ENCODE measurements at regions of chr14 and their contacts with region 1.

Region 1: DNA sequence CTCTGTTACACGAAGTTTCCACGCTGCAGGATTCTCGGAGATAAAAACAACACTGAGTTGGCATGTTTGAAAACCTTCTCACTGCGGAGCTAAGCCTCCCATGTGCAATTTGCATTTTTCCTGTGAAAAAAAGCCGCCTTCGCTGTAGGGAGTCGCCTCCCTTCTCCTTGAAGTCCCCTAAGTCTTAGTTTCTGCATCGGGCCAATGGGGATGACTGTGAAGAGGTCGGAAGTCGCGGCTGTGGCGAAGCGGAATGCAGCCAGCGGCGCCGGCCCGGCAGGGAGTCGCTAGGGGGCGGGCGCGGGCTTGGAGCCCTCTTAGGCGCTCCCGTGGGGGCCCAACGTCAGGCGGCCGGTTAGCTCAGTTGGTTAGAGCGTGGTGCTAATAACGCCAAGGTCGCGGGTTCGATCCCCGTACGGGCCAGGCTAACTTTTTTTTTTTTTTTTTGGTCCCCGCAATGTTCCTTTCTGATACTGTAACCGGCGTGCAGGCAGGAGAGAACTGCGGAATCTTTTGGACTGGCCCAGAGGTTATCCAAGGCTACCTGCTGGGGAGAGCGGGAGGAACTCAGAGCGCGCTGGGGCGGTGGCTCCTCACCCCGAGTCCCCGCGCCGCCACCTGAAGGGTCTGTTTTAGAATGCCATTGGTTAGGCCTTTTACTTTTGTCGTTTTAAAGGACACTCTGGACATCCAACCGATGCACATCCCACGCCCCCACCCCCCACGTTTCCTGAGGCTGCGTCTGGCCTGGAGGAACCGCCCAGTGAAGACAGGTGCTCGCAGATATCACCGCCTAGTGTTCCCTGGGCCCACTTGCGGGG is 2.6 kb upstream of the ZNF839 start:
- DNase-seq: peak; percentile 95
- H3K4me3 Mint-ChIP-seq: peak overlapping the region; percentile 95
- H3K27ac Mint-ChIP-seq: peak overlapping the region; percentile 98
- H3K4me1 Mint-ChIP-seq: peaks cover 56% of the 10 kb centered on the region
- H3K27me3 Mint-ChIP-seq: no peaks in the 10 kb centered on the region

Region 2: DNA sequence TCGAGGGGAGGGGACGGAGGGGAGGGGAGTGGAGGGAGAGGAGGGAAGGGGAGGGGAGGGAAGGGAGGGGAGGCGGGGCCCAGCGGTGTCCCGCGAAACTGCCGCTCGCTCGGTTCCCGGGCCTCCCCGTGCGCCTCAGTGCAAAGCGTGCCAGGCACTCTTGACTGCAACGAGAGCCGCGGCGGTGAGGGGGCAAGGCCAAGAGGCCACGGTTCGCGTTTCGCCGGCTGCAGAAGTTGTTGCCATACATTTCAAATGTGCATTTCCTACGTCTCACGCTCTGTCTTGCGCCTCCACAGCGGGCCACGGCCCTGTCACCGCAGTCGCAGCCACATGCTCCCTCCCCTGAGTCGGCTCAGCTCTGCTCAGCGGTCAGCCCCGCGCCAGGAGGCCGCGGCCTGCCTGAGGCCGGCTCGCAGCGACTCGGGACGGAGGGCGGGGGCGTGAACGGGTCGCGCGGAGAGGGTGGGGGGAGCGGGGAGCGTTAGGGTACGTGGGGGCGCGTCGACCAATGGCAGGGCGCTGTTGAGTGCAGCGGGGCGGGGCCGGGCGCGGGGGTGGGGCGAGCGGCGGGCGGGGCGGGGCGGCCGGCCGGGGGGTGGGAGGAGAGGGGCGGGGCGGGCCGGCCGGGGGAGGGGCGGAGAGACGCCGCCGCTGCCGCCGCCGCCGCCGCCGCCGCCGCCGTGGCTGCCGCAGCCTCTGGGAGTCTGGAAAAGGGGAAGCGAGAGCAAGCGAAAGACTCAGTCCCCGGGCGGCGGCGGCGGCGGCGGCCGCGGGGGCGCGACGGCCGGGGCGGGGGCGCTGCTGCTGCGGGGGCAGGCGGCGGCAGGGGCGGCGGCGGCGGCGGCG is 555.7 kb before region 1 on chr14 and contains the start of gene PPP2R5C:
- CTCF ChIA-PET with region 1: no interaction called
- intact Hi-C with region 1: loop called (anchors 5 kb)
- DNase-seq: peak; percentile 85
- H3K4me3 Mint-ChIP-seq: peak within 1 kb of the TSS; percentile 91
- H3K27ac Mint-ChIP-seq: peak within 1 kb of the TSS; percentile 79
- H3K4me1 Mint-ChIP-seq: peaks cover 42% of the 10 kb centered on the region
- H3K27me3 Mint-ChIP-seq: no peaks in the 10 kb centered on the region
- total RNA-seq, gene PPP2R5C: 280 to 294 TPM

Region 3: DNA sequence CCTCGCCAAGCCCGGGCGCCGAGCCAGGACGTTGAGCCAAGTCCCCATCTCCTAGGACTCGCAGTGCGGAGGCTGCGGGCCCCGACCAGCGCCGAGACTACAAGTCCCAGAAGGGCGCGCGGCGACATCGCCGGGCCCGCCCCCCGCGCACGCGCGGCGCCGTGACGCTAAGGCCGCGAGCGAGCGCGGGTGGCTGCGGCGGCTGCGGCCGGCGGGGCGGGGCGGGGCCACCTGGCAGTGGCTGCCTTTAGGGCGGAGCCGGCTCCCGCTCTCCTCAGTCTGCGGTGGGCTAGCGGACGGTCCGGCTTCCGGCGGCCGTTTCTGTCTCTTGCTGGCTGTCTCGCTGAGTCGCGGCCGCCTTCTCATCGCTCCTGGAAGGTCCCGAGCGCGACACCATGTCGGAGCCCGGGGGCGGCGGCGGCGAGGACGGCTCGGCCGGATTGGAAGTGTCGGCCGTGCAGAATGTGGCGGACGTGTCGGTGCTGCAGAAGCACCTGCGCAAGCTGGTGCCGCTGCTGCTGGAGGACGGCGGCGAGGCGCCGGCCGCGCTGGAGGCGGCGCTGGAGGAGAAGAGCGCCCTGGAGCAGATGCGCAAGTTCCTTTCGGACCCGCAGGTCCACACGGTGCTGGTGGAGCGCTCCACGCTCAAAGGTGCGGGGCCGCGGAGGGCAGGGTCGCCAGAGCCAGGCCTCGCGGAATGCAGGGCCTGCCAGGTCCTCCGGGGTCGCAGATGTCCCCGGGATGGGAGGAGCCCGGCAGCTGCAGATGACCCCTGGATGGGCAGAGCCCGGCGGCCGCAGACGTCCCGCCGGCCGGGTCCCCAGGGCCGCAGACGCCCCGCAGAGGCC is 352.4 kb before region 1 on chr14 and contains the start of gene DYNC1H1:
- CTCF ChIA-PET with region 1: interaction called, 3 read pairs
- intact Hi-C with region 1: loop called (anchors 1 kb)
- DNase-seq: peak; percentile 86
- H3K4me3 Mint-ChIP-seq: peak within 1 kb of the TSS; percentile 89
- H3K27ac Mint-ChIP-seq: peak within 1 kb of the TSS; percentile 71
- H3K4me1 Mint-ChIP-seq: peaks cover 39% of the 10 kb centered on the region
- H3K27me3 Mint-ChIP-seq: no peaks in the 10 kb centered on the region
- total RNA-seq, gene DYNC1H1: 207 to 208 TPM

Region 4: DNA sequence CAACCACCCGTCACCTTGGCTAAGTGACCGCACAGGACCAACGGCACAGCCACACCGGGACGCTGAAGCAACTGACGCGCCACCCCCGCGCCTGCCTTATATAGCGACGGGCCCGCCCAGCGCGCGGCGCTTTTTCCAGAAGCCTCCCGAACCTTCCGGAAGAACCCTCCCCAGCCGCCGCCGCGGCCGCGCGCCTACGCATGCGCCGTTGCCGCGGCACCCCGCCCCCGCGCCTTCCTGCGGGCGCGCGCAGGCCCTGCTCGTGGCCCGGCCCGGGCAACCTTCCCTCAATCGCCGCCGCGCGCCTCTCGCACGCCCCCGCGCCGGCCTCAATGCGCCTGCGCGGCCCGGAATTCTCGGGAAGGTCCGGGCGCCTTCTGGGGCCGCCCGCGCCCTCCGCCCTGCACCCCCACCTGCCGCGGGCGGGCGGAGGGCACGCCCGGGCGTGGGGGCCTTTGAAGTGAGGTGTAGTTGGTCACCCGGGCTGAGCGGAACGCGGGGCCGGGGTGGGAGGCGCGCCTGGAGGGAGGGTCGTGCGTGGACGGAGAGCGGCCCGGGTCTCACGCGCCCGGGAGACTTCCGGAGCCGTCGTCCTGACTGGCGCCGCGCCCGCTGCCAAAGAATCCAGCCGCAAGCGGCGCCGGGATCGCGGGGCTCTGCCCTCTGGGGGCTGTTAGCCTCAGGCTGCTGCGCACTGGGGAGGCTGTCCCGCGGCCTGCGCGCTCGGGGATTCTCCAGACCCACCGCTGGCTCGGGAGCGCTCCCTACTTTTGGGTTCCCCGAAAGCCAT is 229.8 kb before region 1 on chr14 and contains the start of gene HSP90AA1:
- CTCF ChIA-PET with region 1: interaction called, 5 read pairs
- intact Hi-C with region 1: loop called (anchors 1 kb)
- DNase-seq: peak; percentile 92
- H3K4me3 Mint-ChIP-seq: peak within 1 kb of the TSS; percentile 97
- H3K27ac Mint-ChIP-seq: peak within 1 kb of the TSS; percentile 95
- H3K4me1 Mint-ChIP-seq: peaks cover 49% of the 10 kb centered on the region
- H3K27me3 Mint-ChIP-seq: no peaks in the 10 kb centered on the region
- total RNA-seq, gene HSP90AA1: 1,286 to 1,366 TPM

Region 5: GRCh38 chr14:102235275-102235897 is 81.6 kb before region 1 on chr14:
- CTCF ChIA-PET with region 1: interaction called, 3 read pairs
- intact Hi-C with region 1: loop called (anchors 1 kb)
- DNase-seq: peak; percentile 88
- H3K4me3 Mint-ChIP-seq: no peak overlapping the region
- H3K27ac Mint-ChIP-seq: no peak overlapping the region
- H3K4me1 Mint-ChIP-seq: no peaks in the 10 kb centered on the region
- H3K27me3 Mint-ChIP-seq: no peaks in the 10 kb centered on the region

Region 6: GRCh38 chr14:102408724-102409123 is 91.8 kb after region 1 on chr14:
- CTCF ChIA-PET with region 1: no interaction called
- intact Hi-C with region 1: no loop called
- DNase-seq: no peak
- H3K4me3 Mint-ChIP-seq: no peak overlapping the region
- H3K27ac Mint-ChIP-seq: no peak overlapping the region
- H3K4me1 Mint-ChIP-seq: peaks cover 4% of the 10 kb centered on the region
- H3K27me3 Mint-ChIP-seq: no peaks in the 10 kb centered on the region

Region 7: DNA sequence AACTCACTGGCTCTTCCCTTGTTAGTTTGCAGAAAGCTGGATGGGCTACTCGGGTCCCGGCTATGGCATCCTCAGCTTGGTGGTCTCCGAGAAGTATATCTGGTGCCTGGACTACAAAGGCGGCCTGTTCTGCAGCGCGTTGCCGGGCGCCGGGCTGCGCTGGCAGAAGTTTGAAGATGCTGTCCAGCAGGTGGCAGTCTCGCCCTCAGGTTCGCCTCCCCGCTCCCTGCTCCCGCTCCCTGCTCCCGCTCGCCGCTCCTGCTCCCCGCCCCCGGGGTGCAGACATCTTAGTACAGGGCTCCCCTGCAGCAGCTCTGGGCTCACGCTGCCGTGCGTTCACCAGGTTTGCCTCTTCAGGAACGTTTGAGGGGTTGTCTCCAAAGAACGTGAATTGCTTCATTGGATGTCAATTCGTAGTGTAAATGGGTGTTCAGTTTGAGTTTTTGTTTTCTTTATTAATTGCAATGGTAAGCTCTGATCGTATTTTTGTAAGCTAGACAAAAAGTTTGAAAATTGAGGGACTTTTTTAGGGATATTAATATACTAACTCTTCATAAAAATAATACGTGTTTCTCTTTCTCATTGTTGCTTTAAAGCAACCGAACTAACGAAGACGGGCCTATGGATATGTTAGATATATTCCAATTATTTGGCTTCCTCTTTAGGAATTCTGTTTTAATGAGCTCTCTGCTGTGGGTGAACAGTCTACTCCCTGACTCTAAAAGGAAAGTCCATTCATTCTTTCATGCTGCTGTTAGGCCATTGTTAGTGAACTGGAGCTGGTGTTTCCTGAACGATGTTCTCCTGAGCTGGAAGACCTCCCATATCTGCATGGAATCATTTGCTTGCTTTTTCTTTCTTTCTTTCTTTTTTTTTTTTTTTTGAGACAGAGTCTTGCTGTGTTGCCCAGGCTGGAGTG is 121.3 kb after region 1 on chr14:
- CTCF ChIA-PET with region 1: interaction called, 3 read pairs
- intact Hi-C with region 1: loop called (anchors 1 kb)
- DNase-seq: peak; percentile 71
- H3K4me3 Mint-ChIP-seq: peak overlapping the region; percentile 39
- H3K27ac Mint-ChIP-seq: no peak overlapping the region
- H3K4me1 Mint-ChIP-seq: peaks cover 4% of the 10 kb centered on the region
- H3K27me3 Mint-ChIP-seq: no peaks in the 10 kb centered on the region

Region 8: GRCh38 chr14:102462391-102462790 is 145.4 kb after region 1 on chr14:
- CTCF ChIA-PET with region 1: no interaction called
- intact Hi-C with region 1: no loop called
- DNase-seq: no peak
- H3K4me3 Mint-ChIP-seq: no peak overlapping the region
- H3K27ac Mint-ChIP-seq: no peak overlapping the region
- H3K4me1 Mint-ChIP-seq: no peaks in the 10 kb centered on the region
- H3K27me3 Mint-ChIP-seq: no peaks in the 10 kb centered on the region

Region 9: DNA sequence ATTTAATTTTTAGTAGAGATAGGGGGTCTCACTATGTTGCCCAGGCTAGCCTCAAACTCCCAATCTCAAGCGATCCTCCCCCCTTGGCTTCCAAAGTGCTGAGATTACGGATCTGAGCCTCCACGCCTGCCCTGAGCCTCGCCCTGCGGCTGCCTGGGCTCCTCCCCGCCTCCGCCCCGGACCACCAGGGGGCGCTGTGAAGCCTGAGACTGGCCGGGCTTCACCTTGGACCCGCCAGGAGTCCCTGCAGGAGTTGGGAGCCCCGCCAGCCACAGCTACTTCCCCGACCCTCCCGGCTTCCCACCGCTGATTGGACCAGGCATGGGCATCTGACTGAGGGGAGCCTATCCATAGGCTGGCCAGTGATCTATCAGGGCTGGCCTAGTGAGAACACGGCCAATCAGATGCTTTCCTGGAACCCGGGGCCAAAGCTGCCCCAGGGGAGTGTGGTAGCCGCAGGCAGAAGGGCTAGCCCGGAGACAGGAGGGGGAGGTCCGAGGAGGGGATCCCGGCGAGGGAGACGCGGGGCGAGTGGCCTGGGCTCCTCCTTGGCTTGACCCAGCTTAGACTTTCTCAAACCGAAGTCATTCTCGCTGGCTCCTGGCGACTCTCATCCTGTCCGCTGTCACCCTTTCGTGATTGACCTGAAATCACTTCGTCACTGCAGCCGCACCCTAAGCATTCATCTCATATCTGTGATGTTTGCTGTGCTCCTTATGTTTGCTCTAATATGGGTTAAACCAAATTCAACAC is 207.7 kb after region 1 on chr14:
- CTCF ChIA-PET with region 1: interaction called, 3 read pairs
- intact Hi-C with region 1: loop called (anchors 2 kb)
- DNase-seq: peak; percentile 97
- H3K4me3 Mint-ChIP-seq: peak overlapping the region; percentile 83
- H3K27ac Mint-ChIP-seq: peak overlapping the region; percentile 56
- H3K4me1 Mint-ChIP-seq: peaks cover 28% of the 10 kb centered on the region
- H3K27me3 Mint-ChIP-seq: no peaks in the 10 kb centered on the region